Dorsolateral prefrontal cortex (tissue), 120 donors: ENCODE measurements at regions of chr14 and their contacts with region 1.

Region 1: GRCh38 chr14:69055999-69056788 is 77.1 kb upstream of the ACTN1 start:
- DNase-seq: peak in 3 of 10 donors; percentile 23 to 57 (median 50)
- H3K4me3 ChIP-seq: no peak overlapping the region
- H3K27ac ChIP-seq: peak overlapping the region in 35 of 59 donors; percentile 4 to 74 (median 42)
- H3K27me3 ChIP-seq: no peaks in the 10 kb centered on the region
- CTCF ChIP-seq: peak in 15 of 56 donors; percentile 11 to 33 (median 16)

Region 2: GRCh38 chr14:68918612-68919011 is 137.6 kb before region 1 on chr14:
- intact Hi-C with region 1: loop called in 1 of 2 experiments (anchors 5 kb)
- DNase-seq: no peak
- H3K4me3 ChIP-seq: no peak overlapping the region
- H3K27ac ChIP-seq: no peak overlapping the region
- H3K27me3 ChIP-seq: peaks cover 0 to 13% (median 0%) of the 10 kb centered on the region in 45 donors
- CTCF ChIP-seq: no peak